HEK293 (cell line): ENCODE measurements at regions of chr17 and their contacts with region 1.

Region 1: DNA sequence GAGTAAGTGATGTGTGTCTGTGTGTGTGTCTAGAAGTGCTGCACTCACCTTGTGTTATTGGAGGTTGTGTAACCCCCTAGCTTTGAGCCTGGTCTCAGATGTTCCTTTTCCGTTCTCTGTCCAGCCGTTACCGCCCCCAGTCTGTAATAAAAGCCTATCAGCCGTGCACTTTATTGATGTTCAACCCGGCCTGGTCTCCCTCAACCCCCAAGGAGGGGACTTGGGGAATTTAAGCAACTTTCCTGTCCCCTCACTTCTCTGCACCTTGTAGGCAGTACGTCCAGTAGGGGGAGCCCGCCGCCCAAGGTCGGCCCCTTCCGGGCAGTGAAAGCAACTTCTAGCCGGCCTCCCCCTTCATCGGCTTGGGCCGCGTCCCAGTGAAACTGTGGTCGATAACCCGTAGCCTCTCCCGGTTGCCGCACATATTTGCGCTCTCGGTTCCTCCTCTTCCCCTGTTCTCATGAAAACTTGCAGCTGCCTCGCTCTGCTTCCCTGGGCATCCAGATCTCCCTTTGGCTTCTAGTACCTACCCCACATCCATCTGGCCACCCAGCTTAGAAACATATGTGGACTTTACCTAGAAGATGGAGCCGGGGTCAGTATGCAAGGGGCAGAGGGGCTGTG is 7.9 kb downstream of the PNPO start:
- H3K4me3 ChIP-seq: peak overlapping the region; percentile 2
- H3K27ac ChIP-seq: no peak overlapping the region; the same call in 1 of the 2 replicates
- H3K4me1 ChIP-seq: no peaks in the 10 kb centered on the region
- CTCF ChIP-seq: peak; percentile 96

Region 2: DNA sequence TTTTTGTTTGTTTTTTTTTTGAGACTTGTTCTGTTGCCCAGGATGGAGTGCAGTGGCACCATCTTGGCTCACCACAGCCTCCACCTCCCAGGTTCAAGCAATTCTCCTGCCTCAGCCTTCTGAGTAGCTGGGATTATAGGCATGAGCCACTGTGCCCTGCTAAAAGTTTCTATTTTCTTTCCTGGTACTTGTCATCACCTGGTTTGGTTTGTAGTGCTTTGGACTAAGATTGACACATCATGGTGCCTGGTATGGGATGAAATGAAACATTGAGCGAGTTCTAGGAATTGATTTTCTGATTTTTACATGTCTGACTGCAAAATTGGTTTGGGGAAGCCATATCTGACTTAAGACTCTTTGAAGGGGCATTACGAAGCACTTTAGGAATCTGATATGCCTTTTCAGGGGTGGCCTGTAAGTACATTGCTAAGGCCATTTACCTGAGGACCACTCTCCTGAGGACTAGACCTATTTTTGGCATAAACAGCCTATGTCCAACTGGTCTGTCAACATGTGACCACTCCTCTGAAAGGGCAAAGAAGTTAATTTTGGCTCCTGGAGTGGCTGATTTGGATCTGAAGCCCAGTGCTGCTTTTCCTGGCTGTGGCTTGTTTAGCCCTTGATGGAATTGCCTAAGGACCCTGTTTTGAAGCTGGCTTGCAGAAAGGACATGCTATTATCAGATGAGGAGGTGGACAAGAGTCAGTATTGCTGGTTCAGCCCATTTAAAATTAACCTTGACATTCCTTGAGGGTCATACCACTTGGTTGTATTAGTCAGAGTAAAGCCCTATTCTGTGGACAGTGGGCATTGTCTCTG is 273.7 kb before region 1 on chr17:
- CTCF ChIA-PET with region 1: no interaction called
- POLR2A ChIA-PET with region 1: no interaction called
- H3K4me3 ChIP-seq: no peak overlapping the region
- H3K27ac ChIP-seq: no peak overlapping the region
- H3K4me1 ChIP-seq: no peaks in the 10 kb centered on the region
- CTCF ChIP-seq: no peak

Region 3: GRCh38 chr17:47840740-47841603 is 108.3 kb before region 1 on chr17 and contains the start of gene SCRN2:
- CTCF ChIA-PET with region 1: interaction called, 51 read pairs
- POLR2A ChIA-PET with region 1: interaction called, 5 read pairs
- H3K4me3 ChIP-seq: peak within 1 kb of the TSS; percentile 82
- H3K27ac ChIP-seq: peak within 1 kb of the TSS; percentile 24; the same call in 1 of the 2 replicates
- H3K4me1 ChIP-seq: no peaks in the 10 kb centered on the region; the same call in 1 of the 2 replicates
- CTCF ChIP-seq: peak; percentile 97

Region 4: DNA sequence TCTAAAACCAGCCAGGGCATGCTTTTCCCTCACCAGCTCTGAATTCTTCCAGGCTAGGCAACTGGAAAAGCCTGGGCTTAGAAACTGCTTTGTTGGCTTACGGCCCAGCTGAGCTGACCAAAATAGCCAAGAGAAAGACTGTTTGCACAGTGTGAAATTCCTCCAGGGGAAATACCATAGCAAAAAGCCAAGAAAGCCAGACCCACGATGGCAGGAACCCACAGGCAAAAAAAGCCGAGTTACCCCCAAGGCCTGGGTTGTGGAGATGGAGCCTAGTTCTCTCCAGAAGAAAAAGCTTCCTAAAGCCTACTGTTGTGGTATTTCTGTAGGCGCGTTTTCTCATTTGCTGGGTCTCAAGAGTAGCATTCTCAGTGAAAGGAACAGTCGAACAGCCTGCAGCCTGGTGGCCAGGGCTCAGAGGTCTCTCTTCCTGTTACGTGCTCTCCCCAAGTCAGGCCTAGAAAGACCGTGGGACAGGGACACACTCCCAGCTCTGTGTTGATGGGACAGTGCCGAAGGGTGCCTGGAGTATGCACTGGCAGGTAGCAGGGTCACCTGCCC is 43.9 kb before region 1 on chr17:
- CTCF ChIA-PET with region 1: interaction called, 10 read pairs
- POLR2A ChIA-PET with region 1: no interaction called
- H3K4me3 ChIP-seq: no peak overlapping the region
- H3K27ac ChIP-seq: no peak overlapping the region
- H3K4me1 ChIP-seq: no peaks in the 10 kb centered on the region
- CTCF ChIP-seq: no peak

Region 5: DNA sequence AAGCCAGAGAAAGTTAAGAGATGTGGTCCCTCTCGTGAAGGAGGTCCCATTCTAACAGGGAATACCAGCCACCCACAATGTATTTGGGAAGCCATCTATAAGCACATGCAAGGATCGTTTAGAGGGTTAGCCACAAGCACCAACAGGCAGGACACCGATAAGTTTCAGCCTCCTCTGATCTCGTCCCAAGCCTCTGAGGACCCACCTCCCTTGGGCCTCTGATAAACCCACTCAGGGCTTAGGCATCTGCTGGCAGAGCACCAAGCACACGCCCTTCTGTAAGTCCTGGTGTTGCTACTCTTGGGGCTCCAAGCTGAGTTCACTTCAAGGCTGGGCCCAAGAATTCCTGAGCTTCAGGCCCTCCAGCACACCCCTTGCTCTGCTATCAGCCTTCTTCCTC is 13.3 kb before region 1 on chr17:
- CTCF ChIA-PET with region 1: interaction called, 35 read pairs
- POLR2A ChIA-PET with region 1: interaction called, 7 read pairs
- H3K4me3 ChIP-seq: no peak overlapping the region
- H3K27ac ChIP-seq: no peak overlapping the region
- H3K4me1 ChIP-seq: no peaks in the 10 kb centered on the region
- CTCF ChIP-seq: no peak

Region 6: GRCh38 chr17:48002266-48002915 is 53.1 kb after region 1 on chr17:
- CTCF ChIA-PET with region 1: interaction called, 17 read pairs
- POLR2A ChIA-PET with region 1: no interaction called
- H3K4me3 ChIP-seq: no peak overlapping the region
- H3K27ac ChIP-seq: peak overlapping the region; percentile 42; the same call in 1 of the 2 replicates
- H3K4me1 ChIP-seq: peaks cover 11% of the 10 kb centered on the region; the same call in 1 of the 2 replicates
- CTCF ChIP-seq: no peak

Region 7: GRCh38 chr17:48081858-48082257 is 132.6 kb after region 1 on chr17:
- CTCF ChIA-PET with region 1: no interaction called
- POLR2A ChIA-PET with region 1: no interaction called
- H3K4me3 ChIP-seq: no peak overlapping the region
- H3K27ac ChIP-seq: no peak overlapping the region
- H3K4me1 ChIP-seq: peaks cover 18% of the 10 kb centered on the region
- CTCF ChIP-seq: no peak